B cell (primary cell): ENCODE measurements at regions of chrX and their contacts with region 1.

Region 1: GRCh38 chrX:150715184-150715583 is 22.0 kb downstream of the MTMR1 start:
- DNase-seq: no peak
- ATAC-seq: no peak
- H3K4me3 ChIP-seq: no peak overlapping the region
- H3K4me3 Mint-ChIP-seq: no peak overlapping the region
- H3K27ac ChIP-seq: no peak overlapping the region
- H3K27ac Mint-ChIP-seq: peak overlapping the region; percentile 50
- H3K4me1 ChIP-seq: peaks cover 11 to 17% of the 10 kb centered on the region in 2 donors
- H3K4me1 Mint-ChIP-seq: peaks cover 34% of the 10 kb centered on the region
- H3K27me3 ChIP-seq: no peaks in the 10 kb centered on the region
- H3K27me3 Mint-ChIP-seq: no peaks in the 10 kb centered on the region
- CTCF ChIP-seq: no peak

Region 2: GRCh38 chrX:150575416-150575808 is 139.8 kb before region 1 on chrX:
- CTCF ChIA-PET with region 1: no interaction called
- POLR2A ChIA-PET with region 1: no interaction called
- intact Hi-C with region 1: loop called (anchors 5 kb)
- DNase-seq: no peak
- ATAC-seq: no peak
- H3K4me3 ChIP-seq: peak overlapping the region in 2 of 5 experiments; percentile 12 to 22
- H3K4me3 Mint-ChIP-seq: peak overlapping the region; percentile 74
- H3K27ac ChIP-seq: peak overlapping the region in 1 of 2 donors; percentile 12
- H3K27ac Mint-ChIP-seq: peak overlapping the region; percentile 82
- H3K4me1 ChIP-seq: peaks cover 59 to 68% of the 10 kb centered on the region in 2 donors
- H3K4me1 Mint-ChIP-seq: peaks cover 80% of the 10 kb centered on the region
- H3K27me3 ChIP-seq: no peaks in the 10 kb centered on the region
- H3K27me3 Mint-ChIP-seq: no peaks in the 10 kb centered on the region
- CTCF ChIP-seq: no peak

Region 3: GRCh38 chrX:150683536-150684146 is 31.5 kb before region 1 on chrX:
- CTCF ChIA-PET with region 1: interaction called, 72 read pairs
- POLR2A ChIA-PET with region 1: no interaction called
- intact Hi-C with region 1: loop called (anchors 1 kb)
- DNase-seq: peak; percentile 69
- ATAC-seq: peak; percentile 39
- H3K4me3 ChIP-seq: no peak overlapping the region
- H3K4me3 Mint-ChIP-seq: no peak overlapping the region
- H3K27ac ChIP-seq: no peak overlapping the region
- H3K27ac Mint-ChIP-seq: no peak overlapping the region
- H3K4me1 ChIP-seq: peaks cover under 1 to 8% of the 10 kb centered on the region in 2 donors
- H3K4me1 Mint-ChIP-seq: peaks cover 7% of the 10 kb centered on the region
- H3K27me3 ChIP-seq: no peaks in the 10 kb centered on the region
- H3K27me3 Mint-ChIP-seq: no peaks in the 10 kb centered on the region
- CTCF ChIP-seq: peak; percentile 70

Region 4: DNA sequence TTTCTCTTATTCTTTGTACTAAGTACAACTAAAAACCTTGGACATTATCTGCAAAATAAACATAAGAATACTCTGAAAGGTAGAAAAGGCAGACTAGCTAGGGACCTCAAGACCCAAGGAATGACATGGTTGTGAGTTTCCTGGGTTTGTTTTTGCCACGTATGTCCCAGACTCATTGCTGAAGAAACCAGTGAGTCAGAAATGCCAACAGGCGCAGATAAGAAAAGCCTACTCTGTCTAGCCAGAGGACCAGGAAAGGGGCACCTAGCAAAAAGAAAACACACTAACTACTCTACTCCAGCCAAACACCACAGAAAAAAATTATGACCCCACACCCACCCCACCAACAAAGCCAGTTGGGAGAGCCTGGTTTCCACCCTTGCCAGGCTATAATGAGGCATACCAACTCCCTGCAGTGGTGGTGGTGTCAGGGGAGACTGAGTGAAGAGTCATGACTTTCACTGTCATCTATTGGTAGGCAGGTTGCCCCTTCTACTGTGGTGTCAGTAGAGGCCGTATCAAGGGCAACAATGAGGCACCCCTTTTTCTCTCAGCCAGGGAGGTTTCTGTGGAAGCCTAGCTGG is 11.1 kb before region 1 on chrX:
- CTCF ChIA-PET with region 1: interaction called, 49 read pairs
- POLR2A ChIA-PET with region 1: no interaction called
- intact Hi-C with region 1: no loop called
- DNase-seq: no peak
- ATAC-seq: no peak
- H3K4me3 ChIP-seq: no peak overlapping the region
- H3K4me3 Mint-ChIP-seq: no peak overlapping the region
- H3K27ac ChIP-seq: peak overlapping the region in 1 of 2 donors; percentile 22
- H3K27ac Mint-ChIP-seq: no peak overlapping the region
- H3K4me1 ChIP-seq: peaks cover 8% of the 10 kb centered on the region in 2 donors
- H3K4me1 Mint-ChIP-seq: peaks cover 25% of the 10 kb centered on the region
- H3K27me3 ChIP-seq: no peaks in the 10 kb centered on the region
- H3K27me3 Mint-ChIP-seq: no peaks in the 10 kb centered on the region
- CTCF ChIP-seq: no peak

Region 5: DNA sequence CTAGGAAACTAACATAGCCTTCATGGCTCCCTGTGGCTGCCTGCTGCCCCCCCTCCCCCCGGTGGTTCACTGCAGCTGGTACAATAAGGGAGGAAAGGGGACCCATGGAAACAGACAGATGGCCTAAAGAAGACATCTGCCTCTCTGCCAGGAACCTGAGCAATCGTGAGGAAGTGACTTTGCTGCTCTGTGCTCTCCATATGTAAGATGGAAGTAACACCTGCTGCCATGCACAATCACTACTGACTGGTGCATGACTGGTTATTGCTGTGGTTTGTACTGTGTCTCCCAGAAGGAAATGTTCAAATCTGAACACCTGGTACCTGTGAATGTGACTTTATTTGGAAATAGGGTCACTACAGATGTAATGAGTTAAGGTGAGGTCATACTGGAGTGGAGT is 139.7 kb after region 1 on chrX:
- CTCF ChIA-PET with region 1: no interaction called
- POLR2A ChIA-PET with region 1: no interaction called
- intact Hi-C with region 1: no loop called
- DNase-seq: no peak
- ATAC-seq: no peak
- H3K4me3 ChIP-seq: no peak overlapping the region
- H3K4me3 Mint-ChIP-seq: no peak overlapping the region
- H3K27ac ChIP-seq: no peak overlapping the region
- H3K27ac Mint-ChIP-seq: no peak overlapping the region
- H3K4me1 ChIP-seq: no peaks in the 10 kb centered on the region
- H3K4me1 Mint-ChIP-seq: peaks cover 2% of the 10 kb centered on the region
- H3K27me3 ChIP-seq: no peaks in the 10 kb centered on the region
- H3K27me3 Mint-ChIP-seq: no peaks in the 10 kb centered on the region
- CTCF ChIP-seq: no peak